Left colon (tissue), 2 donors: ENCODE measurements at regions of chr1 and their contacts with region 1.

Region 1: DNA sequence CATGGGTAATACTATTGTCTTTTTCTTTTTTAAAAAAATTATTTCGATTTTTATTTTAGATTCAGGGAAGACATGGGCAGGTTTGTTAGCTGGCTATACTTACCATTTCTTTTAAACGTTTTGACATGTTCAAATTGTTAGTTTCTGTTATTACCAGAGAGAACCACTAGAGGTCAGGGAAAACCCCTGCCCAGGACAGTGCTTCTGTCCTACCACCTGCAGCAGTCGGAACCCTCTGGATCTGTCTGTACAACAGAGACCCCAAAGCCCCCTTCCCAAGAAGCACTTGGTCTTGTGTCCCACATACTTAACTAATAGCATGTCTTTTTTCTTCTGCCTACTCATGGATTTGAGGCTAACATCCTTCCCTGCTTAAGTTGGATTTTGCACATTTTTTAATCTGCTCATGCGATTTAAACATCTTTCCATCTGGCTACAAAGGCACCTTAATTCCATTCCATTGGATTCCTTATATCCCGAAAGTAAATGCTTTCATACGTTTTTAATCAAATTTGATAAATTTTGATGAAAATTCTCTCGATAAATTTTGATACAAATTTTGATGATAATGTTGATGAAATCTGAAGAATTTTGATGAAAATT is 10.0 kb upstream of the C1orf115 start:
- DNase-seq: peak in 1 of 2 donors; percentile 18
- ATAC-seq: peak; percentile 80

Region 2: GRCh38 chr1:220462776-220463175 is 217.4 kb before region 1 on chr1:
- intact Hi-C with region 1: no loop called
- DNase-seq: peak in 1 of 2 donors; percentile 36
- ATAC-seq: peak; percentile 81

Region 3: GRCh38 chr1:220473440-220473839 is 206.7 kb before region 1 on chr1:
- intact Hi-C with region 1: no loop called
- DNase-seq: no peak
- ATAC-seq: no peak

Region 4: DNA sequence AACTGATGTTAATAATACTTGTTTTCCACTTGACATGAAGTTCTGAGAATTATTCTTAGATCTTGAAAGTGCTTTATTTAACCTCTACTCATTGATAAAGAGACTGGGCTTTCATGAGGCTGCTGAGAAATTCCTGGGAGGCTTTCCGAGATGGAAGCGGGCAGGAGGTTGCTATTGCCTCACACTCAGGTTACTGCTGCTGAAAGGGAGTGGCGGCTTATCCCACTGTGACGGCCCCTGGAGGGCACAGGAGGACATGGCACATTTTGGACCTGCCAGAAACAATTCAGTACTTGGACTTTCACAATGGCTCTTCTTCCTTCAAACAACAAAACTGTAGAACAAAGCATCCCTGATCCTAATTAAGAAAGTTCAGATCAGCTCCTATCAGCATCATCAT is 168.4 kb before region 1 on chr1:
- intact Hi-C with region 1: no loop called
- DNase-seq: no peak
- ATAC-seq: no peak

Region 5: DNA sequence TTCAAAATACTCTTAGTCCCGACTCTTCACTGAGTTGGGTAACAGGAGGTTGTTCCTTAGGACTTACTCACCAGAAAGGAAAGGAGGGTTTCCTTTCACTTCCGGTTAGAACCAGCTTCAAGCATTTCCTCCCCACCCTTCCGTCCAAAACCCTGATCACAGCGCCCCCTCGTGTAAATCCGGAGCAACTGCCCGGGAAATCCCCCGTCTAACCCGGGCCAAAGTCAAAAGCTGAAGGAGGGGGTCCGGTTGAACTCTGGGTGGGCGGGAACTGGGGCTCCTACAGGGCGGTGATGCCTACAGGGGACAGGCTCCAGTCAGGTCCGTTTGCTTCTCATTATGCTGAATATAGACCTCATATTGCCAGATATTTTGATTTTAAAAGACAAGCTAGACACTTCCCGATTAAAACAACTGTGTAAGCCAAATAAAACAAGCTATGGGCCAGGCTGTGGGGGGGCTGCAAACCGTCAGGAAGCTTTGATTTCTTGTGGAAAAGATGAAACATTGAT is 53.0 kb after region 1 on chr1:
- intact Hi-C with region 1: loop called in 1 of 2 experiments (anchors 10 kb)
- DNase-seq: peak; percentile 67
- ATAC-seq: peak; percentile 78